Activated CD8-positive, alpha-beta T cell treated with anti-CD3 and anti-CD28 coated beads, Interleukin-2, amount 10 ng/mL, durations not matched to agents 7 days and 5 days (primary cell): ENCODE measurements at regions of chr4 and their contacts with region 1.

Region 1: GRCh38 chr4:2220016-2220630 is 21.8 kb downstream of the HAUS3 start:
- DNase-seq: peak; percentile 85
- ATAC-seq: peak; percentile 90
- H3K4me3 Mint-ChIP-seq: no peak overlapping the region
- H3K27ac Mint-ChIP-seq: no peak overlapping the region
- H3K4me1 Mint-ChIP-seq: peaks cover 12% of the 10 kb centered on the region
- H3K27me3 Mint-ChIP-seq: no peaks in the 10 kb centered on the region

Region 2: GRCh38 chr4:1981251-1982058 is 238.7 kb before region 1 on chr4:
- CTCF ChIA-PET with region 1: no interaction called
- POLR2A ChIA-PET with region 1: no interaction called
- DNase-seq: no peak
- ATAC-seq: no peak
- H3K4me3 Mint-ChIP-seq: no peak overlapping the region
- H3K27ac Mint-ChIP-seq: peak overlapping the region; percentile 34
- H3K4me1 Mint-ChIP-seq: no peaks in the 10 kb centered on the region
- H3K27me3 Mint-ChIP-seq: no peaks in the 10 kb centered on the region

Region 3: DNA sequence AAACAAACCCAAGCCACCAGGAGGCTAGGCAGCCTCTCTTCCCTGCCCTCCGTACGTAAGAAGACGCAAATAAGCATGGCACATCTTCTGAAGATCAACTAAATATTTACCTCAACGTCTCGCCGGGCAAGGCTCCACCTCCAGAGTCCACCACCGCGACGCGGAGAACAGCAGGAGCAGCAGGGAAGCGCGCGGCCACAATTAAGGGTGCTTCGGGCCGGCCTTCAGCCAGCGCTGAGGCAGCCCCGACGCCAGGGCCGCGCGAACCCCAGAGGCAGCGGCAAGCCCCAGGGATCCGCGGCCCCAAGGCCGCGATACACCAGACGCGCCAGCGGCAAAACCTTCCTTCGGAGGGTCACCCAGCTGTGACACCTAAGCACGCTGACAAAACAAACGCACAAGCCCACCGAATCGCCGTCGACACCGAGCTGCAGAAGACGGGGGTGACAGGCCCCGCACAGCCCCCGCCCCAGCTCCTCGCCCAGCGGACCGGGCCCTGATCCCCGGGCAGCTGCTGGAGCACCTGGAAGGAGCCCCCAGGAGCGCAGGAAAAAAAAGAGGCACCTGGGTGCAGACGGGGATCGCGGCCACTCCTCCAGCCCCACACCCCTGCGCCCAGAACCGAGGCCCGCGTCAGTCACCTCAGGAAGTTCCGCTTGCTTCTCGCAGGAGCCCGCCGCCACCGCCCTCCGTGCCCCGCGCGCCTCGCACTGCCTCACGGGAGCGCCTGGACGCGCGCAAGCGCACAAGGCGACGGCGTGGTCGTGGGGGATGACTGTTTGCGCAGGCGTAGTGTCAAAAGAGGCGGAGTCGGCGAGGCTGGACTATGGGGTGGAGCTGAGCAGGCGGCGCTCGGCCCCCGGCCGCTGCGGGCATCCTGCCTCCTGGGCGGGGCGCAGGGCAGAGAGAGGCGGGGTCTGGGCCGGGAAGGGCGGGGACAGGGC is 21.6 kb after region 1 on chr4 and contains the starts of genes HAUS3 and POLN:
- CTCF ChIA-PET with region 1: interaction called, 43 read pairs
- POLR2A ChIA-PET with region 1: interaction called, 6 read pairs
- DNase-seq: peak; percentile 99
- ATAC-seq: peak; percentile 92
- H3K4me3 Mint-ChIP-seq: peak within 1 kb of the TSS; percentile 95
- H3K27ac Mint-ChIP-seq: peak within 1 kb of the TSS; percentile 93
- H3K4me1 Mint-ChIP-seq: peaks cover 60% of the 10 kb centered on the region
- H3K27me3 Mint-ChIP-seq: peaks cover 4% of the 10 kb centered on the region
- total RNA-seq, gene HAUS3: 22.0 to 25.8 TPM
- total RNA-seq, gene POLN: 2.4 to 2.5 TPM

Region 4: GRCh38 chr4:2361366-2362265 is 141.5 kb after region 1 on chr4:
- CTCF ChIA-PET with region 1: interaction called, 13 read pairs
- POLR2A ChIA-PET with region 1: no interaction called
- DNase-seq: no peak
- ATAC-seq: no peak
- H3K4me3 Mint-ChIP-seq: no peak overlapping the region
- H3K27ac Mint-ChIP-seq: no peak overlapping the region
- H3K4me1 Mint-ChIP-seq: no peaks in the 10 kb centered on the region
- H3K27me3 Mint-ChIP-seq: no peaks in the 10 kb centered on the region

Region 5: DNA sequence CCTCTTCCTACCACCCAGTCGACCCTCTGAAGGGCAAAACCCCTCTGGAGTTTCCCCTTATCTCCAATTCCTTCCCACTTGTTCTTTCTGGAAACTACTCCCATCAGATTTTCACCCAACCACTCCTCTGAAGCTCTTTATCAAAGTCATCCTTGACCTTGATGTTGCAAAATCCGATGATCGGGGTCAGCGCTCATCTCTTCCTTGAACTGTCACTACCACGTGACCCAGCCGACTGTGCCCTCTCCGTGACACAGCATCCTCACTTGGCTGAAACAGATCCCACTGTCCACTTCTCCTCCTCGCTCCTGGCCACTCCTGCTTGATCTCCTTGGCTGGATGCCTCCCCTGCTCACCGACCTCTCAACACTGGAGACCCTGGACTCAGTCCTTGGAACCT is 199.7 kb after region 1 on chr4:
- CTCF ChIA-PET with region 1: interaction called, 11 read pairs
- POLR2A ChIA-PET with region 1: no interaction called
- DNase-seq: no peak
- ATAC-seq: no peak
- H3K4me3 Mint-ChIP-seq: no peak overlapping the region
- H3K27ac Mint-ChIP-seq: no peak overlapping the region
- H3K4me1 Mint-ChIP-seq: peaks cover 35% of the 10 kb centered on the region
- H3K27me3 Mint-ChIP-seq: peaks cover 52% of the 10 kb centered on the region

Region 6: GRCh38 chr4:2462218-2462991 is 242.3 kb after region 1 on chr4:
- CTCF ChIA-PET with region 1: interaction called, 14 read pairs
- POLR2A ChIA-PET with region 1: no interaction called
- DNase-seq: peak; percentile 67
- ATAC-seq: peak; percentile 98
- H3K4me3 Mint-ChIP-seq: peak overlapping the region; percentile 58
- H3K27ac Mint-ChIP-seq: no peak overlapping the region
- H3K4me1 Mint-ChIP-seq: peaks cover 13% of the 10 kb centered on the region
- H3K27me3 Mint-ChIP-seq: peaks cover 17% of the 10 kb centered on the region

Region 7: GRCh38 chr4:2484993-2485392 is 264.9 kb after region 1 on chr4:
- CTCF ChIA-PET with region 1: interaction called, 14 read pairs
- POLR2A ChIA-PET with region 1: no interaction called
- DNase-seq: peak; percentile 87
- ATAC-seq: peak; percentile 93
- H3K4me3 Mint-ChIP-seq: peak overlapping the region; percentile 38
- H3K27ac Mint-ChIP-seq: peak overlapping the region; percentile 83
- H3K4me1 Mint-ChIP-seq: peaks cover 83% of the 10 kb centered on the region
- H3K27me3 Mint-ChIP-seq: no peaks in the 10 kb centered on the region

Region 8: DNA sequence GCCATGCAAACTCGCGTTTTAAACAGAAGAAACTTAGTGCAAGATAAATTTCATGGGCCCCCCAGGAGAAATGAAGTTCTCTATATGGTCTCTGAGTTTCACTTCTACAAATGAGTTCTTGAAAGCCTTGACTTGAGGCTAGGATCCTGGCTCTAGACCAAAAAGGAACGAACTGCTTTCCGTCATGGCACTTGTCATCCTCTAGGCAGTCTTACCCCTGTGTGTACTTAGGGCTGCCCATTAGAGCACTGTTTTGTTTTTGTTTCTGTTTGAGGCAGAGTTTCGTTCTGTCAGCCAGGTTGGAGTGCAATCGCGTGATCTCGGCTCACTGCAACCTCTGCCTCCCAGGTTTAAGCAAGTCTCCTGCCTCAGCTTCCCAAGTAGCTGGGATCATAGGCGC is 277.8 kb after region 1 on chr4:
- CTCF ChIA-PET with region 1: no interaction called
- POLR2A ChIA-PET with region 1: no interaction called
- DNase-seq: no peak
- ATAC-seq: no peak
- H3K4me3 Mint-ChIP-seq: no peak overlapping the region
- H3K27ac Mint-ChIP-seq: no peak overlapping the region
- H3K4me1 Mint-ChIP-seq: peaks cover 4% of the 10 kb centered on the region
- H3K27me3 Mint-ChIP-seq: no peaks in the 10 kb centered on the region